ENCODE measurements at regions of chr12 and their contacts with region 1.

Region 1: DNA sequence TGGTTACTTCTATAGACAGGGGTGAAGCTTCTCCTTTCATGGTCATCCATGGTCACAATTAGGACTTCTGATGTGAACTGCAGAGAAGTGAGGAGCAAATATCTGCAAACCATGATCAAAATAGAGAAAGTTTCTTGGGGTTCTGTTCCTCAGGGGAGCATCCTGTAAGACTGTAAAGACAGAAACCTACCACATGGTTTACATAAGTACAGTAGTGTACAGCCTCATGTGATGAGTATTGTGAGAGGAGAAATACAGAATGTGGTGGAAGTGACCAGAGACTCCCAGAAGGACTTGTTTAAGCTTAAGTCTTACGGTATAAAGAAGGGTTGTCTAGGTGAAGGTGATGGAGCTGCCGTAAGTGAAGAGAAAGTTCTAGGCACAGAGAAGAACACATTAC is 484.7 kb downstream of the LRIG3 start:
- DNase-seq: no peak
- H3K4me3 ChIP-seq: no peak overlapping the region
- H3K27ac ChIP-seq: no peak overlapping the region
- H3K4me1 ChIP-seq: no peaks in the 10 kb centered on the region
- H3K27me3 ChIP-seq: no peaks in the 10 kb centered on the region
- CTCF ChIP-seq: no peak
- EP300 ChIP-seq: no peak
- POLR2A ChIP-seq: no peak

Region 2: GRCh38 chr12:57730336-57731067 is 705.1 kb before region 1 on chr12:
- intact Hi-C with region 1: loop called in 1 of 4 experiments (anchors 5 kb)
- DNase-seq: peak in 1 of 5 donors; percentile 10
- H3K4me3 ChIP-seq: no peak overlapping the region
- H3K27ac ChIP-seq: no peak overlapping the region
- H3K4me1 ChIP-seq: peaks cover 7% of the 10 kb centered on the region
- H3K27me3 ChIP-seq: no peaks in the 10 kb centered on the region
- CTCF ChIP-seq: no peak
- EP300 ChIP-seq: no peak
- POLR2A ChIP-seq: no peak

Region 3: GRCh38 chr12:58296863-58297262 is 138.8 kb before region 1 on chr12:
- intact Hi-C with region 1: no loop called
- DNase-seq: no peak
- H3K4me3 ChIP-seq: no peak overlapping the region
- H3K27ac ChIP-seq: no peak overlapping the region
- H3K4me1 ChIP-seq: no peaks in the 10 kb centered on the region
- H3K27me3 ChIP-seq: no peaks in the 10 kb centered on the region
- CTCF ChIP-seq: no peak
- EP300 ChIP-seq: no peak
- POLR2A ChIP-seq: no peak

Measured in ovary (tissue), 10 donors.